ENCODE measurements at regions of chr11 and their contacts with region 1.

Region 1: GRCh38 chr11:8911029-8911826 is at the start of gene AKIP1:
- DNase-seq: peak; percentile 94
- H3K4me3 Mint-ChIP-seq: peak within 1 kb of the TSS; percentile 84
- H3K27ac Mint-ChIP-seq: peak within 1 kb of the TSS; percentile 33
- H3K4me1 Mint-ChIP-seq: peaks cover 34% of the 10 kb centered on the region
- H3K27me3 Mint-ChIP-seq: no peaks in the 10 kb centered on the region
- CTCF ChIP-seq: no peak
- total RNA-seq, gene AKIP1: 64.6 and 67.6 TPM in 2 replicates

Region 2: GRCh38 chr11:8688414-8689362 is 222.5 kb before region 1 on chr11:
- CTCF ChIA-PET with region 1: interaction called, 3 read pairs
- POLR2A ChIA-PET with region 1: interaction called, 24 read pairs
- intact Hi-C with region 1: loop called (anchors 2 kb)
- DNase-seq: peak; percentile 97
- H3K4me3 Mint-ChIP-seq: peak overlapping the region; percentile 75
- H3K27ac Mint-ChIP-seq: peak overlapping the region; percentile 87
- H3K4me1 Mint-ChIP-seq: peaks cover 33% of the 10 kb centered on the region
- H3K27me3 Mint-ChIP-seq: no peaks in the 10 kb centered on the region
- CTCF ChIP-seq: no peak

Region 3: DNA sequence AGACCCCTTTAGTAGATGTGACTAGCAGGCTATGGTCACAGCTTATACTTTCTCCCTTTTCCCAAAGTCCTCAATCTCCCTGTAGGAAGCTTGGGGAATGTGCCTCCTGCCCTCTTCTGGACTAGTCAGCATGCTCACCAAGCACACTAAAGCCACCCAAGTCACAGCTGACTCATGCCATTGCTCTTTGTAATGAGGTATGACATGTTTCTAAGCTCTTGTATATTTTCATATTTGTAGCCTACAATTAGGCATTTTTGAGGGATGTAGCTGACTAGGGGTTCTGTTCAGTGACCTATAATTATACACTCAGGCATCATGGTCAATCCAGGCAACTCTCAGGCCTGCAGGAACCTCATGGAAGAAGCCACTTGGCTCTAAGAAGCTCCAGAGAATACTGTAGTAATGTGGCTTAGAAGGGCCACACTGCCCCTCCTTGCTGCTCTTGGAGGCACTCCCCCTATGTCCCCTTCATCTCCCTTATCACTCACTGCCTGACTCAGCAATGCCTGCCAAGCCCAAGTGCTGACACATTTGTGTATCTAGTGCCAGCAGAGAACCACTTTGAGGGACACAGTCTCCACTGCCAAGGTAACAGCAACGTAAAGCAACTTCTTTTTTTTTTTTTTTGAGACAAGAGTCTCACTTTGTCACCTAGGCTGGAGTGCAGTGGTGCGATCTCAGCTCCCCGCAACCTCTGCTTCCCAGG is 142.4 kb before region 1 on chr11:
- CTCF ChIA-PET with region 1: interaction called, 8 read pairs
- POLR2A ChIA-PET with region 1: interaction called, 4 read pairs
- intact Hi-C with region 1: loop called (anchors 5 kb)
- DNase-seq: peak; percentile 80
- H3K4me3 Mint-ChIP-seq: no peak overlapping the region
- H3K27ac Mint-ChIP-seq: peak overlapping the region; percentile 81
- H3K4me1 Mint-ChIP-seq: peaks cover 59% of the 10 kb centered on the region
- H3K27me3 Mint-ChIP-seq: no peaks in the 10 kb centered on the region
- CTCF ChIP-seq: no peak

Region 4: GRCh38 chr11:8839957-8840945 is 71.0 kb before region 1 on chr11:
- CTCF ChIA-PET with region 1: no interaction called
- POLR2A ChIA-PET with region 1: no interaction called
- intact Hi-C with region 1: no loop called
- DNase-seq: no peak
- H3K4me3 Mint-ChIP-seq: no peak overlapping the region
- H3K27ac Mint-ChIP-seq: no peak overlapping the region
- H3K4me1 Mint-ChIP-seq: peaks cover 18% of the 10 kb centered on the region
- H3K27me3 Mint-ChIP-seq: no peaks in the 10 kb centered on the region
- CTCF ChIP-seq: no peak

Region 5: GRCh38 chr11:8870411-8871170 is 40.6 kb before region 1 on chr11:
- CTCF ChIA-PET with region 1: interaction called, 4 read pairs
- POLR2A ChIA-PET with region 1: interaction called, 15 read pairs
- intact Hi-C with region 1: no loop called
- DNase-seq: peak; percentile 59
- H3K4me3 Mint-ChIP-seq: peak overlapping the region; percentile 78
- H3K27ac Mint-ChIP-seq: no peak overlapping the region
- H3K4me1 Mint-ChIP-seq: peaks cover 10% of the 10 kb centered on the region
- H3K27me3 Mint-ChIP-seq: no peaks in the 10 kb centered on the region
- CTCF ChIP-seq: no peak

Region 6: GRCh38 chr11:8922691-8923090 is 11.5 kb after region 1 on chr11:
- CTCF ChIA-PET with region 1: interaction called, 14 read pairs
- POLR2A ChIA-PET with region 1: interaction called, 15 read pairs
- intact Hi-C with region 1: no loop called
- DNase-seq: no peak
- H3K4me3 Mint-ChIP-seq: no peak overlapping the region
- H3K27ac Mint-ChIP-seq: no peak overlapping the region
- H3K4me1 Mint-ChIP-seq: peaks cover 8% of the 10 kb centered on the region
- H3K27me3 Mint-ChIP-seq: no peaks in the 10 kb centered on the region
- CTCF ChIP-seq: no peak

Region 7: GRCh38 chr11:8928981-8929565 is 17.8 kb after region 1 on chr11:
- CTCF ChIA-PET with region 1: interaction called, 15 read pairs
- POLR2A ChIA-PET with region 1: interaction called, 15 read pairs
- intact Hi-C with region 1: no loop called
- DNase-seq: no peak
- H3K4me3 Mint-ChIP-seq: no peak overlapping the region
- H3K27ac Mint-ChIP-seq: no peak overlapping the region
- H3K4me1 Mint-ChIP-seq: peaks cover under 1% of the 10 kb centered on the region
- H3K27me3 Mint-ChIP-seq: no peaks in the 10 kb centered on the region
- CTCF ChIP-seq: no peak